ENCODE measurements at regions of chr11 and their contacts with region 1.

Region 1: GRCh38 chr11:7986768-7987559 is at the start of gene EIF3F:
- DNase-seq: peak; percentile 100
- ATAC-seq: peak; percentile 95
- H3K4me3 ChIP-seq: peak within 1 kb of the TSS; percentile 91
- H3K27ac ChIP-seq: peak within 1 kb of the TSS; percentile 30
- H3K4me1 ChIP-seq: peaks cover 11% of the 10 kb centered on the region
- H3K27me3 ChIP-seq: no peaks in the 10 kb centered on the region
- CTCF ChIP-seq: peak; percentile 76 to 91 (median 83)
- EP300 ChIP-seq: no peak
- POLR2A ChIP-seq: peak; percentile 73
- RAD21 ChIP-seq: peak; percentile 70
- polyA plus RNA-seq, gene EIF3F: 81.3 to 226 TPM

Region 2: DNA sequence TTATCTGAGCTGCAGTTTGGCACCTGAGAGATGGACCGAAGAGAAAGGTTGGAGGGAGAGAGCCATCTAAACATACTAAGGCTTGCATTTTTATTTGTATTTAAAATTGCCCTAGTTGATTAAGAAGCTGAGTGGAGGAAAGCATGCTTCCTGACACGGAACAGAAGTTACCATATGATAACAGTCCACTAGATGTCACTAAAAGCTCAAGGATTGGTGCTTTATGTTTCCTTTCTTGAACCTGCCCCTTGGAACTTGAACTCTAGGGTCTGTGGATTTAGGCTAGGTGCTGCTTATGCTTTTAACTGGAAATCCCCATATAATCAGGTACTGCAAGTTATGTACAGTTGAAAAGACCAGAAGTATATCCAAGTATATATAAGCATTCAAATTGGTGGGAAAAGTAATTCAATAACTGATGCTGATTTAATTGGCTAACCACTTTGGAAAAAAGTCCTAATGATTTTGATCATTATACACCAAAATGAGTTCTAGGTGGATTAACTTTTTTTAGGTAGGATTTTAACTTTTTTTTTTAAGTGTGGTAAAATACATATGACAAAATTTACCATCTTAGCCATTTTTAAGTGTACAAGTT is 888.6 kb before region 1 on chr11:
- CTCF ChIA-PET with region 1: interaction called, 7 read pairs
- POLR2A ChIA-PET with region 1: no interaction called
- RAD21 ChIA-PET with region 1: interaction called, 10 read pairs
- SMC1A ChIA-PET with region 1: no interaction called
- in situ Hi-C with region 1: loop called (anchors 5 kb)
- intact Hi-C with region 1: loop called (anchors 2 kb)
- DNase-seq: peak; percentile 40
- ATAC-seq: peak; percentile 95
- H3K4me3 ChIP-seq: no peak overlapping the region
- H3K27ac ChIP-seq: no peak overlapping the region
- H3K4me1 ChIP-seq: no peaks in the 10 kb centered on the region
- H3K27me3 ChIP-seq: no peaks in the 10 kb centered on the region
- CTCF ChIP-seq: peak; percentile 58 to 74 (median 63); a peak in 5 of 6 replicates
- EP300 ChIP-seq: no peak
- POLR2A ChIP-seq: no peak
- RAD21 ChIP-seq: peak; percentile 94

Region 3: GRCh38 chr11:7570938-7571521 is 415.9 kb before region 1 on chr11:
- CTCF ChIA-PET with region 1: no interaction called
- POLR2A ChIA-PET with region 1: no interaction called
- RAD21 ChIA-PET with region 1: no interaction called
- SMC1A ChIA-PET with region 1: no interaction called
- in situ Hi-C with region 1: no loop called
- intact Hi-C with region 1: no loop called
- DNase-seq: no peak
- ATAC-seq: no peak; the same call in 2 of the 3 replicates
- H3K4me3 ChIP-seq: no peak overlapping the region
- H3K27ac ChIP-seq: no peak overlapping the region
- H3K4me1 ChIP-seq: peaks cover 6% of the 10 kb centered on the region
- H3K27me3 ChIP-seq: no peaks in the 10 kb centered on the region
- CTCF ChIP-seq: no peak
- EP300 ChIP-seq: no peak
- POLR2A ChIP-seq: no peak
- RAD21 ChIP-seq: no peak

Region 4: GRCh38 chr11:7892840-7893254 is 94.1 kb before region 1 on chr11:
- CTCF ChIA-PET with region 1: interaction called, 271 read pairs
- POLR2A ChIA-PET with region 1: interaction called, 29 read pairs
- RAD21 ChIA-PET with region 1: interaction called, 161 read pairs
- SMC1A ChIA-PET with region 1: interaction called, 190 read pairs
- in situ Hi-C with region 1: loop called (anchors 5 kb)
- intact Hi-C with region 1: loop called (anchors 1 kb)
- DNase-seq: no peak
- ATAC-seq: peak; percentile 76
- H3K4me3 ChIP-seq: no peak overlapping the region
- H3K27ac ChIP-seq: no peak overlapping the region
- H3K4me1 ChIP-seq: peaks cover 14% of the 10 kb centered on the region
- H3K27me3 ChIP-seq: no peaks in the 10 kb centered on the region; a peak in 1 of 4 replicates
- CTCF ChIP-seq: peak; percentile 59 to 79 (median 77); a peak in 5 of 6 replicates
- EP300 ChIP-seq: no peak
- POLR2A ChIP-seq: no peak
- RAD21 ChIP-seq: peak; percentile 73

Region 5: DNA sequence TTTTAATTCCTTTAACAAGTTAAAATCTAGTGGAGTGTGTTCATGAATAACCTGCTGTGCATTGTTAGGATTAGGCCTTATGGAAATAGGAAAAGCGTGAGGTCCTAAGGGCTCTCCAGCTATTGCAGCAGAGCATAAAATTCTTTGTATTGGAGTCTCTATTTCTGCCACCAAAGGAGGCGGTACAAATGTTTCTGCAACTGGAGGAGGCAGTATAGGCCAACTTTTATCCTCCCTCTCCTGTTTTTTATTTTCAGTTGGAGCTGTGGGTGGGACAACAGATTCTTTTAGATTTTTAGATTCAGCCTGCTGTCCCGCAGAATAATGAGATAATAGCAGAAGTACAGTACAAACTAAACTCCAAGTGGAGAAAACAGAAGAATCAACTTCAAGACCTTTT is 82.0 kb before region 1 on chr11:
- CTCF ChIA-PET with region 1: interaction called, 14 read pairs
- POLR2A ChIA-PET with region 1: no interaction called
- RAD21 ChIA-PET with region 1: interaction called, 4 read pairs
- SMC1A ChIA-PET with region 1: interaction called, 17 read pairs
- in situ Hi-C with region 1: no loop called
- intact Hi-C with region 1: no loop called
- DNase-seq: no peak
- ATAC-seq: no peak
- H3K4me3 ChIP-seq: no peak overlapping the region
- H3K27ac ChIP-seq: no peak overlapping the region
- H3K4me1 ChIP-seq: no peaks in the 10 kb centered on the region
- H3K27me3 ChIP-seq: peaks cover 0 to 2% of the 10 kb centered on the region in 2 experiments; a peak in 1 of 4 replicates
- CTCF ChIP-seq: no peak
- EP300 ChIP-seq: no peak
- POLR2A ChIP-seq: no peak
- RAD21 ChIP-seq: no peak

Region 6: GRCh38 chr11:7964261-7964660 is 22.7 kb before region 1 on chr11:
- CTCF ChIA-PET with region 1: interaction called, 14 read pairs
- POLR2A ChIA-PET with region 1: no interaction called
- RAD21 ChIA-PET with region 1: no interaction called
- SMC1A ChIA-PET with region 1: interaction called, 5 read pairs
- in situ Hi-C with region 1: no loop called
- intact Hi-C with region 1: no loop called
- DNase-seq: no peak
- ATAC-seq: no peak
- H3K4me3 ChIP-seq: no peak overlapping the region
- H3K27ac ChIP-seq: no peak overlapping the region
- H3K4me1 ChIP-seq: no peaks in the 10 kb centered on the region
- H3K27me3 ChIP-seq: peaks cover 0 to 1% of the 10 kb centered on the region in 2 experiments; a peak in 1 of 4 replicates
- CTCF ChIP-seq: no peak
- EP300 ChIP-seq: no peak
- POLR2A ChIP-seq: no peak
- RAD21 ChIP-seq: no peak

Region 7: GRCh38 chr11:7969756-7970646 is 17.0 kb before region 1 on chr11:
- CTCF ChIA-PET with region 1: interaction called, 15 read pairs
- POLR2A ChIA-PET with region 1: no interaction called
- RAD21 ChIA-PET with region 1: interaction called, 13 read pairs
- SMC1A ChIA-PET with region 1: interaction called, 10 read pairs
- in situ Hi-C with region 1: no loop called
- intact Hi-C with region 1: no loop called
- DNase-seq: no peak
- ATAC-seq: no peak
- H3K4me3 ChIP-seq: no peak overlapping the region
- H3K27ac ChIP-seq: no peak overlapping the region
- H3K4me1 ChIP-seq: no peaks in the 10 kb centered on the region
- H3K27me3 ChIP-seq: peaks cover 0 to 1% of the 10 kb centered on the region in 2 experiments; a peak in 1 of 4 replicates
- CTCF ChIP-seq: no peak
- EP300 ChIP-seq: no peak
- POLR2A ChIP-seq: no peak
- RAD21 ChIP-seq: no peak

Region 8: DNA sequence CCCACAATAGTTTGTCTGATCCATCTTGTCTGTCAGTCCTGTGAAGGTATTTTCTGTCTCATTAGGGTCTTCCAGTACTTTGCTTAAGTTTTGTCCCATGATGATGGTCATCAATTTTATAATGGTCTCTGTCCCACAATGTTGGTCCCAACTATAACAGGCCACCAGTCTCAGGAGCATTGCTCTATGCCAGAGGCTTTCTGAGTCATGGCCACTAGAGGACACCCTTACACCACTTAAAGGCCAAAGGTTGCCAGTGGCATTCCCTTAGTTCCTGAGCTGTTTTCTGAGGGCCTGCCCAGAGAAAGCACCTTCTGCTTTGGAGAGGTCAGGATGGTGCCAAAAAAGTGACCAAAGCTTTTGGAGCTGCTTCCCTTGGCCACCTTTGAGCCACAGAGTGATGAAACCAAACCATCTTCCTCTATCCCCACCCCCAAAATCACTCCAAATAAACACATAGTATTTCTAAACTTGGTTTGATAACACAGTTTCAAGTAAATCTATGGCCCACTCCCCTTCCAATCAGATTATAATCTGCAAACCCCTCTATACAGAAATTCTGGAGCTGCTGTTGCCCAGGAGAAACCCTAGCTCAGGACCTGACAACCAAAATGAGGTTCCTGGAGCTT is 19.5 kb after region 1 on chr11:
- CTCF ChIA-PET with region 1: interaction called, 11 read pairs
- POLR2A ChIA-PET with region 1: interaction called, 3 read pairs
- RAD21 ChIA-PET with region 1: interaction called, 6 read pairs
- SMC1A ChIA-PET with region 1: interaction called, 8 read pairs
- in situ Hi-C with region 1: no loop called
- intact Hi-C with region 1: no loop called
- DNase-seq: peak; percentile 7
- ATAC-seq: peak; percentile 95
- H3K4me3 ChIP-seq: no peak overlapping the region
- H3K27ac ChIP-seq: no peak overlapping the region
- H3K4me1 ChIP-seq: no peaks in the 10 kb centered on the region
- H3K27me3 ChIP-seq: no peaks in the 10 kb centered on the region
- CTCF ChIP-seq: peak; percentile 91 to 92 (median 91)
- EP300 ChIP-seq: no peak
- POLR2A ChIP-seq: no peak
- RAD21 ChIP-seq: peak; percentile 94